ENCODE measurements at regions of chr1 and their contacts with region 1.

Region 1: GRCh38 chr1:160675641-160676410 is 29.0 kb upstream of the SLAMF1 start:
- DNase-seq: peak; percentile 92
- H3K4me3 Mint-ChIP-seq: no peak overlapping the region
- H3K27ac Mint-ChIP-seq: peak overlapping the region; percentile 45
- H3K4me1 Mint-ChIP-seq: peaks cover 49% of the 10 kb centered on the region
- H3K27me3 Mint-ChIP-seq: no peaks in the 10 kb centered on the region

Region 2: DNA sequence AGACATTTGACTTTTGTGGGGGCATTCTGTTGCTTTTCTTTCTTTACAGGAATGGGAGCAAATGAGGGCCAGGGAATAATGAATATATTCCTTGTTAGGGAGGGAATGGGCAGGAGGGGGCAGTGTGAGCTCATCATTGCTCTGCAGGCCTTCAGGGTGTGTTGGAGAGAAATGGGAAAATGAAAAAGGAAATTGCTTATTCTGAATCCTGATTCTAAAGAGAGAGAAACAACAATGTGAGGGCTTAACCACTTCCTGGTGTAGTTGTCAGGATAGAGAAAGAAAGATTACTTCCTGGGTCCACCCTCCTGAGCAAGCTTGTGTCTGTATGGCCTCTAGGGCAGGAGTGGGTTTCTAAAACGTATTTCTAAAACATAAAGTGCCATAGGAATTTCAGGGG is 247.2 kb before region 1 on chr1:
- intact Hi-C with region 1: loop called (anchors 1 kb)
- DNase-seq: peak; percentile 79
- H3K4me3 Mint-ChIP-seq: peak overlapping the region; percentile 39
- H3K27ac Mint-ChIP-seq: peak overlapping the region; percentile 85
- H3K4me1 Mint-ChIP-seq: peaks cover 52% of the 10 kb centered on the region
- H3K27me3 Mint-ChIP-seq: no peaks in the 10 kb centered on the region

Region 3: GRCh38 chr1:160451119-160451858 is 224.5 kb before region 1 on chr1:
- intact Hi-C with region 1: loop called (anchors 5 kb)
- DNase-seq: peak; percentile 60
- H3K4me3 Mint-ChIP-seq: peak overlapping the region; percentile 42
- H3K27ac Mint-ChIP-seq: peak overlapping the region; percentile 87
- H3K4me1 Mint-ChIP-seq: peaks cover 65% of the 10 kb centered on the region
- H3K27me3 Mint-ChIP-seq: no peaks in the 10 kb centered on the region

Region 4: DNA sequence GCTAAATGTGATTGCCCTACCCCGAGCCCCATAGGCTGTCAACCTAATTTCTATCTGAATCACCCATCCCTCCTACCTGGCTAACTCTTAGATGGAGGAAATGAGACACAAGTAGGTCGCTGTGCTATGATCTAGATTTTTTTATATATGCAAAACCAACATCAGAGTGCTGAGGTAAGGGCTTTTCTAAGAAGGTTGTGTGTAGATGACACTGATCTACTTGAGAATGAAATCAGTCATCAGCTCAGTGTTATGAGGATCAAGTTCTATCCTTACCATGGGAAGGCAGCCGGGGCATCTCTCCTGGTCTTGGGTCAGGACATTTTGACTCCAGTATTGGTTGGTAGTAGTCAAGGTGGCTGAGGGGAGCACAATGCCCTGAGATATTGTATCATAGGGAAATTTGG is 52.6 kb before region 1 on chr1:
- intact Hi-C with region 1: loop called (anchors 1 kb)
- DNase-seq: peak; percentile 78
- H3K4me3 Mint-ChIP-seq: peak overlapping the region; percentile 75
- H3K27ac Mint-ChIP-seq: peak overlapping the region; percentile 99
- H3K4me1 Mint-ChIP-seq: peaks cover 83% of the 10 kb centered on the region
- H3K27me3 Mint-ChIP-seq: no peaks in the 10 kb centered on the region

Region 5: DNA sequence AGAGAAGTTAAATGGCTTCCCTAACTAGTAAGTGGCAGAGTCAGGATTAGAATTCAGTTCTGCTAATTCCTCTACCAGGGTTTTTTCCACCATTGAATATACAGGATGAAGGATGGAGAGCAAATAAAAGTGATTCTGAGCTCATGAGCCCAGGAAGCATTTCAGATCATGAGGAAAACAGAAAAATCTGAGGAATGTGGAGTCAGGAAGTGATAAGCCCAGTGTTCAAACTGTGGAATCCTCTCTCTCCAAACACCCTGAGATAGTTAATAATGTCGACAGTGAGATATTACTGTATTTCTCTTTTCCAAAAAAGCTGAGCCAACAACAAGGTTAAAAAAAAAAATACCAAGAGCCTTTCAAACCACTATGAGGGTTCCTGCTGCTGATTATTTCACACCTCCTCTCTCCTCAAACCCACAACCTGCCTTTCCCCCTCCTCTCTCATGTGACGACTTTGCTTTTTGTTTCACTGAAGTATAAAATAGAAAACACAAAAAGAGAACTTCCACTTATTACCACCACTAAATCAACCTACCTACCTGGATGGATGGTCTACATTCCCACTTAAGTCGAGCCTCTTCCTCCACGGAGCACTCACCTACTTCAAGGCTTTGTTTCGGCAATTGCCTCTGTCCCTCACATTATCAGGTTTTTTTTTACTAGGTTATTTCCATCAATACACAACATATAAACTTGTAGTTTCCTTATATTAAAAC is 37.8 kb before region 1 on chr1:
- intact Hi-C with region 1: loop called (anchors 1 kb)
- DNase-seq: peak; percentile 89
- H3K4me3 Mint-ChIP-seq: peak overlapping the region; percentile 79
- H3K27ac Mint-ChIP-seq: peak overlapping the region; percentile 96
- H3K4me1 Mint-ChIP-seq: peaks cover 86% of the 10 kb centered on the region
- H3K27me3 Mint-ChIP-seq: no peaks in the 10 kb centered on the region

Region 6: GRCh38 chr1:160646711-160647328 is 29.0 kb before region 1 on chr1 and contains the start of gene SLAMF1:
- intact Hi-C with region 1: loop called (anchors 1 kb)
- DNase-seq: peak; percentile 81
- H3K4me3 Mint-ChIP-seq: peak within 1 kb of the TSS; percentile 98
- H3K27ac Mint-ChIP-seq: peak within 1 kb of the TSS; percentile 98
- H3K4me1 Mint-ChIP-seq: peaks cover 49% of the 10 kb centered on the region
- H3K27me3 Mint-ChIP-seq: no peaks in the 10 kb centered on the region
- total RNA-seq, gene SLAMF1: 113 and 114 TPM in 2 replicates

Region 7: DNA sequence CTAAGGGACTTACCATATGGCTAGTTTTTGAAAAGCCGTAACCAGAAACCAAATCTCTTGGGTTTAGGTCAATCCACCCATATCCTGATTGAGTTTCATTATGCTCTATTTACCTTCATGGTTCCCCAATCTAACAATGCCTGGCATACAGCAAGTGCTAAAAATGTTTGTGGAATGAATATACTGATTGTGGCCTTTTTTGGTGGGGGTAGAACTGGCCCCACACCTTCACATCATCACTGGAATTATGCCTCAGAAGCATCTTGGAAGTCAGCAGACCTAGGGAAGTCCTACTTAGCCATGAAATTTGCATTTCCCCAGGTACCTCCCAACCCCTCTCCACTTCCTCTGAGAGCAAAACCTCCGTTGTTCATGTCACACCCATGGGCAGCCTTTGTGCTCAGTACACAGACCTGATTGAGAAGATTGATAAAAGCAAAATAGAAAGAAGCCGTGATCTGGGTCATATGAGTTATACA is 11.2 kb before region 1 on chr1:
- intact Hi-C with region 1: loop called (anchors 1 kb)
- DNase-seq: peak; percentile 86
- H3K4me3 Mint-ChIP-seq: peak overlapping the region; percentile 74
- H3K27ac Mint-ChIP-seq: peak overlapping the region; percentile 93
- H3K4me1 Mint-ChIP-seq: peaks cover 63% of the 10 kb centered on the region
- H3K27me3 Mint-ChIP-seq: no peaks in the 10 kb centered on the region